MCF 10A (cell line): ENCODE measurements at regions of chr1 and their contacts with region 1.

Region 1: GRCh38 chr1:167599957-167600581 is 30.0 kb upstream of the RCSD1 start:
- DNase-seq: peak; percentile 75
- H3K4me3 Mint-ChIP-seq: no peak overlapping the region
- H3K27ac Mint-ChIP-seq: no peak overlapping the region
- H3K4me1 Mint-ChIP-seq: peaks cover 10% of the 10 kb centered on the region
- H3K27me3 Mint-ChIP-seq: no peaks in the 10 kb centered on the region
- CTCF ChIP-seq: peak; percentile 73

Region 2: GRCh38 chr1:167573026-167573425 is 27.0 kb before region 1 on chr1:
- CTCF ChIA-PET with region 1: interaction called, 24 read pairs
- POLR2A ChIA-PET with region 1: interaction called, 9 read pairs
- intact Hi-C with region 1: no loop called
- DNase-seq: peak; percentile 57
- H3K4me3 Mint-ChIP-seq: no peak overlapping the region
- H3K27ac Mint-ChIP-seq: peak overlapping the region; percentile 76
- H3K4me1 Mint-ChIP-seq: peaks cover 18% of the 10 kb centered on the region
- H3K27me3 Mint-ChIP-seq: no peaks in the 10 kb centered on the region
- CTCF ChIP-seq: no peak

Region 3: GRCh38 chr1:167635156-167635648 is 35.1 kb after region 1 on chr1:
- CTCF ChIA-PET with region 1: interaction called, 28 read pairs
- POLR2A ChIA-PET with region 1: no interaction called
- intact Hi-C with region 1: no loop called
- DNase-seq: no peak
- H3K4me3 Mint-ChIP-seq: no peak overlapping the region
- H3K27ac Mint-ChIP-seq: no peak overlapping the region
- H3K4me1 Mint-ChIP-seq: peaks cover 25% of the 10 kb centered on the region
- H3K27me3 Mint-ChIP-seq: no peaks in the 10 kb centered on the region
- CTCF ChIP-seq: no peak

Region 4: DNA sequence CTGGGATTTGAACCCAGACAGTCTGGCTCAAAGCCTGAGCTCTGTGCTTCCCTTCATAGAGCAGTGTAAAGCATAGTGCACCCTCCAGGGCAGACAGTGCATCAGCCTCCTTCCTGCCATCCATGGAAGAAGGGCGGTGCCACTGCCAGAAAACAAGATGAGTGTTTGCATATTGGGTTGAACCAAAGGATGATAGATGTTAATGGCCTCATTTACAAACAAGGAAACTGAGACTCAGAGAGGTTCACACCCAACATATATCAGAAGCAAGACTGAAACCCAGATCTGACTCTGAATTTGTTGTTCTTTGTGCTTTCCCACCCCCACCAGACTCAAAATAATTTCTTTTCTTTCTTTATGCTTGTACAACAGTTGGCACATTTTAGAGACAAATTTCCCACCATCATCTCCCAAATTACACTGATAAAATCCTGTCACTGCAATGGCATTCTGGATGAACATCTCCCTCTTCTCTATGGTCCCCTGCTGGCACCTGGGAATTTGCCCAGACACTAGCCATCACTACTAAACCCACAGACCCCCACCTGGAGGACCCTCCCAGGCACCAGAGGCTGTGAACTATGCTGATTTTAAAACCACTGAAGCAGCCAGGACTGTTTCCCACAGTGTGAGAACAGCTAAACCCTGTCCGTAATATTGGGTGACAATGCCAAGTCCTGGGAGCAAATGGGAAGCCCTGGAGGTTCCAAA is 76.3 kb after region 1 on chr1:
- CTCF ChIA-PET with region 1: interaction called, 33 read pairs
- POLR2A ChIA-PET with region 1: interaction called, 6 read pairs
- intact Hi-C with region 1: no loop called
- DNase-seq: no peak
- H3K4me3 Mint-ChIP-seq: no peak overlapping the region
- H3K27ac Mint-ChIP-seq: no peak overlapping the region
- H3K4me1 Mint-ChIP-seq: peaks cover 12% of the 10 kb centered on the region
- H3K27me3 Mint-ChIP-seq: no peaks in the 10 kb centered on the region
- CTCF ChIP-seq: no peak

Region 5: GRCh38 chr1:167708940-167709389 is 108.9 kb after region 1 on chr1:
- CTCF ChIA-PET with region 1: interaction called, 28 read pairs
- POLR2A ChIA-PET with region 1: interaction called, 8 read pairs
- intact Hi-C with region 1: no loop called
- DNase-seq: no peak
- H3K4me3 Mint-ChIP-seq: no peak overlapping the region
- H3K27ac Mint-ChIP-seq: no peak overlapping the region
- H3K4me1 Mint-ChIP-seq: peaks cover 8% of the 10 kb centered on the region
- H3K27me3 Mint-ChIP-seq: peaks cover 6% of the 10 kb centered on the region
- CTCF ChIP-seq: no peak

Region 6: GRCh38 chr1:167803358-167804207 is 203.5 kb after region 1 on chr1:
- CTCF ChIA-PET with region 1: interaction called, 11 read pairs
- POLR2A ChIA-PET with region 1: interaction called, 9 read pairs
- intact Hi-C with region 1: loop called (anchors 1 kb)
- DNase-seq: peak; percentile 95
- H3K4me3 Mint-ChIP-seq: peak overlapping the region; percentile 3
- H3K27ac Mint-ChIP-seq: no peak overlapping the region
- H3K4me1 Mint-ChIP-seq: peaks cover 43% of the 10 kb centered on the region
- H3K27me3 Mint-ChIP-seq: no peaks in the 10 kb centered on the region
- CTCF ChIP-seq: peak; percentile 97